Adrenal gland (tissue), 19 donors: ENCODE measurements at regions of chr13 and their contacts with region 1.

Region 1: DNA sequence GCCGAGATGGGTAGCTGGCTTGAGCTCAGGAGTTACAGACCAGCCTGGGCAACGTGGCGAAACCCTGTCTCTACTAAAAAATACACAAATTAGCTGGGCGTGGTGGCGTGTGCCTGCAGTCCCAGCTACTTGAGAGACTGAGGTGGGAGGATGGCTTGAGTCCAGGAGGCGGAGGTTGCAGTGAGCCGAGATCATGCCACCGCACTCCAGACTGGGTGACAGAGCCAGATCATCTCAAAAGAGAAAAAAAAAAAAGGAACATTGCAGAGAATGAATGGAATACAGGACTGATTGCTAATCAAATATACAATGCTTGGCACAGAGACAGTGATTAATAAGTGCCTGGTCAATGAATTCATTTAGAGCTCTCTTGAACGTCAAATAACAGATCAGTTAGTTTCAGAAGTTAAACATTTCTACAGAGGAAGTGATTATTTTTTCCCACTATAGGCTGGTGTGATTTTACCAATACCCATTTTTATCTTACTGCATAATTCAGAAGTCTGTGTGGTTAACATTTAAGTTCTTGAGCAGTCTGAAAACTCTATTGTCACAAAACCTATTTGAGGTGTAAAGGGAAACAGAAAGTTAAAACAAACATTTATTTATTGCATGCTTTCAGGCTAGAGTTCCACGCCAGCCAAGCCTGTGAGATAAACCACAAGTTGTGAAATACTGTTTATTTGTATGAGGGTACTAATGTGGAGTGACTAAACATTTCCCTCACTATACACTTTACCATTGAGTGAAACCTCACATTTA is 7.7 kb upstream of the TBC1D4 start:
- DNase-seq: peak in 2 of 7 donors; percentile 36 to 50
- H3K4me3 ChIP-seq: no peak overlapping the region
- H3K27ac ChIP-seq: no peak overlapping the region
- H3K4me1 ChIP-seq: peaks cover 9 to 20% of the 10 kb centered on the region in 2 donors
- H3K27me3 ChIP-seq: no peaks in the 10 kb centered on the region
- CTCF ChIP-seq: no peak
- POLR2A ChIP-seq: no peak

Region 2: DNA sequence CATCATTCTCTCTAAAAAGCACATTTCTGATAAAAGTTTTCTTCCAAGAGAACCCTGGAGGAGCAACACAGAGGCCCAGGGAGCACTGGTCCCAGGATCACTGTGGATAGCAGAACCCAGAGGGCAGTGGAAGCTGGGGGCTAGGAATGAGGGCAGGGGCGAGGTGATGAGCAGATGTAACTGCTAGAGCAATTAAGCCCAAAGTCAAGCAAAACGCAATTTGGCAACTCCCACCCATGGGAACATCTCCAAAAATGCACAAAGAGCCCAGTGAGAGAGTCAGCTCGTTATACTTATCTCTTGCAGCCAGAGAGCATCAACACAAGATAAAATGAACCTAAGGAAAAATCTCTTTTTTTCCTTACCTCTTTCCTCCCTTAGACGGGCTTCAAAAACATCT is 291.9 kb before region 1 on chr13:
- intact Hi-C with region 1: no loop called
- DNase-seq: no peak
- H3K4me3 ChIP-seq: no peak overlapping the region
- H3K27ac ChIP-seq: no peak overlapping the region
- H3K4me1 ChIP-seq: no peaks in the 10 kb centered on the region
- H3K27me3 ChIP-seq: no peaks in the 10 kb centered on the region
- CTCF ChIP-seq: no peak
- POLR2A ChIP-seq: no peak

Region 3: DNA sequence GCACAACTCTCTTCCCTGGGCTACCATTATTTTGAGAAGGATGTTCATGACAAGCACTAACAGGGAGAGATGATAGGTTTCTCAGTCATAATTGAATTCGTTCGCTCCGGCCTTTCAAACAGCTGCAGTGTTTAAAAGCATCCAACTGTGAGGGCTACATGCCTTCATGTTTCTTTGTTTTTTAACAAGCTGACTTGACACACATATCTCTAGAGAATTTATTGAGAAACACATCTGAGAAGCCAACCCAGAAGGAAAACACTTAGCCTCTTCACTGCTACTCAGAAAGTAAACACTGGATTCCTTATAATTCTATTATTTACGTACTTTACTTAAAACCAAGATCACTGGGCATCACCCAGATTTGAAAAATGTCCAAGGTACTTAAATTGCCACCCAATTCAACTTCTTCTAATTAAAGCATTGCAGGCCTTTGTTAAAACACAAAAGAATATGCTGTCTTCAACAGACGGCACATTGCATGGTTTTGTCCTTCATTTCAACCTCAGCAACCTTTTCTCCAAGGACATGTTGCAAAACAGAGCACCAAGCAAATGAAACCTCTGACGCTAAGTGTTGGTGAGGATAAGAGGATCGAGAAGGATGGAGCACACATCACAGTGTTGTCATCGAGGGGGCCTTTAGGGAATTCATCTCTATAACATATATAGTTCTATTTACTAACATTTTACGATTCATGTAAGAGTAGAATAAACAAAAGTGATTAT is 83.5 kb before region 1 on chr13:
- intact Hi-C with region 1: no loop called
- DNase-seq: no peak
- H3K4me3 ChIP-seq: no peak overlapping the region
- H3K27ac ChIP-seq: peak overlapping the region in 4 of 5 donors; percentile 2 to 56 (median 36)
- H3K4me1 ChIP-seq: peaks cover 15 to 53% of the 10 kb centered on the region in 2 donors
- H3K27me3 ChIP-seq: no peaks in the 10 kb centered on the region
- CTCF ChIP-seq: no peak
- POLR2A ChIP-seq: no peak

Region 4: GRCh38 chr13:75537401-75538365 is 48.0 kb after region 1 on chr13 and contains the start of gene COMMD6:
- intact Hi-C with region 1: loop called (anchors 5 to 10 kb)
- DNase-seq: peak; percentile 68 to 84 (median 78)
- H3K4me3 ChIP-seq: peak within 1 kb of the TSS in 3 of 4 donors; percentile 28 to 83 (median 76)
- H3K27ac ChIP-seq: peak within 1 kb of the TSS in 4 of 5 donors; percentile 41 to 85 (median 64)
- H3K4me1 ChIP-seq: peaks cover 0 to 53% of the 10 kb centered on the region in 2 donors
- H3K27me3 ChIP-seq: no peaks in the 10 kb centered on the region
- CTCF ChIP-seq: peak; percentile 56 to 84 (median 72)
- POLR2A ChIP-seq: peak in 1 of 2 donors; percentile 82
- total RNA-seq, gene COMMD6: 60.7 to 599 (median 340) TPM